ENCODE measurements at regions of chr5 and their contacts with region 1.

Region 1: GRCh38 chr5:124748687-124749594 is 2.5 kb upstream of the ZNF608 start:
- DNase-seq: peak; percentile 46
- H3K4me3 ChIP-seq: peak overlapping the region; percentile 79
- H3K27ac ChIP-seq: peak overlapping the region; percentile 93
- H3K4me1 ChIP-seq: peaks cover 27% of the 10 kb centered on the region
- H3K27me3 ChIP-seq: no peaks in the 10 kb centered on the region
- CTCF ChIP-seq: no peak

Region 2: GRCh38 chr5:124649491-124650146 is 99.3 kb before region 1 on chr5:
- intact Hi-C with region 1: loop called (anchors 5 kb)
- DNase-seq: peak; percentile 73
- H3K4me3 ChIP-seq: peak overlapping the region; percentile 71
- H3K27ac ChIP-seq: peak overlapping the region; percentile 90
- H3K4me1 ChIP-seq: peaks cover 54% of the 10 kb centered on the region
- H3K27me3 ChIP-seq: no peaks in the 10 kb centered on the region
- CTCF ChIP-seq: no peak

Region 3: DNA sequence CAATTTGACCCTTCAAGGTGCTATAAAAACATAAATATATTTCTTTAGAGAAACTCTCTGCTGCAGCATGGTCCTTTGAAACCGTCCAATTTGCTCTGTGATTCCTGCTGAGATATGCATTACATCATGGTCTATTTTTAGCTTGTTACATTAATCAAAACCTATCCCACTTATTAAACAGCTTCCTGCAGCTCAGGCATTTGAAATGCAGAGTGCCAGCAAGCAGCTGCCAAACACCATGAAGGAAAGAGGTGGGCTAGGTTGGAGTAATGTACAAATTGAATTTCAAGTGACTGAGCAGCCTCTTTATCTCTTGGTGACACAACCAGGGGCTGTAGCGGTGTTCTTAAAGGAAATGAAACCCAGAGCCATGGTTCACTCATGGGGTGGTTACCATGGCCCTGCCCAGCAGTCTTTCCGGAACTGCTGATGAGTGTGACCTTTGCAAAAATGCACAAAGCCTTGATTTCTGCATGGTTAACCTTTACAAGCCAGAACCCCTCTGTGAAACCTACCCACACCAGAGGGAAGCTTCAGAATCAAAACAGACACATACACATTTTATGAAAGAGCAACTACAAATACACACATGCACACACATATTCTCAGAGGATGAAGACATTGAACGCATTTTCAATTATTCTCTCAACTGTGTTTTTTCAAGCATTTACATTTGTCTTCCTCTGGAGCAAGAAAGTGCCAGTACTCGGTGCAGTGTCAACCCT is 153.3 kb after region 1 on chr5:
- intact Hi-C with region 1: loop called (anchors 10 kb)
- DNase-seq: no peak
- H3K4me3 ChIP-seq: no peak overlapping the region
- H3K27ac ChIP-seq: no peak overlapping the region
- H3K4me1 ChIP-seq: peaks cover 33% of the 10 kb centered on the region
- H3K27me3 ChIP-seq: no peaks in the 10 kb centered on the region
- CTCF ChIP-seq: no peak